GM18951 (cell line): ENCODE measurements at regions of chr19 and their contacts with region 1.

Region 1: DNA sequence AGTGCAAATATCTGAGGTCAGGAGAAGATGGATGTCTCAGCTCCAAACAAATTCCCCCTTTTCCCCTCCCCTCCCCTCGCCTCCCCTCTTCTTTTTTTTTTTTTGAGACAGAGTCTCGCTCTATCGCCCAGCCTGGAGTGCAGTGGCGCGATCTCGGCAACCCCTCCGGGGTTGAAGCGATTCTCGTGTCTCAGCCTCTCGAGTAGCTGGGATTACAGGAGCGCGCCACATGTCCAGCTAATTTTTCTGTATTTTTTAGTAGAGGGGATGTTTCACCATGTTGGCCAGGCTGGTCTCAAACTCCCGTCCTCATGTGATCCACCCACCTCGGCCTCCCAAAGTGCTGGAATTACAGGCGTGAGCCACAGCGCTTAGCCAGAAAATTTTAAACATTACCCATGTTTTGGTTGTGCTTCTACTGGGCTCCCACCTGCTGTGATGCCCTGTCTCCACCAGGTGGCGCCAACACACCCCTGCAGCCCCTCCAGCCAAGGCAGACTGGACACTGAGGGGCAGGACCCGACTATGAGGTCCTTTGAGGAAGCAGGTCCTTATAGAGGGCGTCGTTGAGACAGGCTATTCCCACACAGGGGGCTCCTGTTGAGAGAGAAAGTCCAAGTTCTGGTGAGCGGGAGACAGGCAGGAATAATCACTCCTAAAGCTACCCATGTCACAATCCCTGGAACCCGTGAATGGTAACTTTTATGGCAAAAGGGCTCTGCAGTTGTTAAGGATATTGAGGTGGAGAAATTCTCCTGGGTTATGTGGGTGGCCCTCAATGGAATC is 6.3 kb downstream of the ERICH4 start:
- POLR2A ChIP-seq: no peak

Region 2: DNA sequence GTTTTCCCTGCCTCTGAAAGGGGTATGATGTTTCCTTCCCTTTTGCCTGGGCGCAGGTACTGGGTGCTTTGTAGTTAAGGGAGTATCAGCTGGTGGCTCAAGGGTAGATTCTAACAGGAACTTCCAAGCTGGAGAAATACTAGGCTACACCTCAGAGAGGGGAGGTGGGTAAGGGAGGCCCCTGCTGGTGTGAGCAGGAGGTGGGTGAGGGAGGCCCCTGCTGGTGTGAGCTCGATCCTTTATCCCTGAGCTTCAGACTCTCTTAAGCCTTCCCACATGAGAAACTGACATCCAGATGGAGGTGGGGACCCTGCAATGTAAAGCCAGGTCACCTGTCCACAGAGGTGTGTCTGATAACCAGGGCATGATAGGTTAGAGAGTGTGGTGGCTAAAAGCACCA is 426.1 kb before region 1 on chr19:
- in situ Hi-C with region 1: no loop called
- POLR2A ChIP-seq: no peak

Region 3: DNA sequence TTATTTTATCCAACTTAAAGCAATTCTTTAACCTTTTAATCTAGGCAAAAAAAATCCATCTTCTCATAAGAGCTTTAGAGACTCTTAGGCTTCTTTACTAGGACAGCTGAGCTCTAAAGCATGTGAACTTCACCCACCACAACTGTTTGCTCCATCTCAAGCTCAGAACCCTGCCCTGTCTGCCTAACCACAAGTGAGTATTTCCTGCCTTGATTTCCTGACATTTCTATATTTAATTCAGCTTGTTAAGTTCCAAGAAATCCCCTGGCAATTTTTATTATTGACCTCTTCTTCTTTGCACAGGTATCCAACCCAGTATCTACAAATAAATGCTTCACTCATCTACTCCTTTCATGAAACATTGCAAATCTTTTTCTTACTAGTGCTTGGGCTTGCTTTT is 105.6 kb after region 1 on chr19:
- in situ Hi-C with region 1: loop called (anchors 5 kb)
- POLR2A ChIP-seq: no peak